GM12878 (cell line): ENCODE measurements at regions of chr5 and their contacts with region 1.

Region 1: DNA sequence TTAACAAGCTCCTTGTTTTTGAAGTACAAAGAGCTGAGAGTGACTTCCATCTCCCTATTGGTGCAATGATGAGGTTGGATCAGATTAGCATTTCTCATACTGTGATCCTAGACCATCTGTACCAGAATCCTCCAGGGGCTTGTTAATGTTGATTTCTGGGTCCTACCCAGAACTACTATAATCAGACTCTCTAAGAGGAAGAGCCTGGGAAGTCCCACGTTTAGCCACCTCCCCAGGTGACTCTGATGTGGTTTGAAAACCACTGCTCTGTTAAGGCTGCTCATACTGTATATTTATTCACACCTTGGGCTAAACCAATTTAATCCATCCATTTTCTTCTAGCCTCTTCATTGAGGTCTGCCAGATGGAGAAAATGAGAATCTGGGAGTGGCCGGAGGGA is 49.6 kb upstream of the SMIM32 start:
- DNase-seq: peak; percentile 24
- ATAC-seq: peak; percentile 93
- H3K4me3 ChIP-seq: no peak overlapping the region
- H3K27ac ChIP-seq: no peak overlapping the region
- H3K4me1 ChIP-seq: peaks cover 3% of the 10 kb centered on the region; the same call in 1 of the 2 replicates
- H3K27me3 ChIP-seq: no peaks in the 10 kb centered on the region; a peak in 1 of 4 replicates
- CTCF ChIP-seq: no peak
- EP300 ChIP-seq: 0 out of 4 replicates have a peak, but pooled peaks of 1 of the 2 experiments have one; percentile 12
- POLR2A ChIP-seq: no peak
- RAD21 ChIP-seq: no peak

Region 2: DNA sequence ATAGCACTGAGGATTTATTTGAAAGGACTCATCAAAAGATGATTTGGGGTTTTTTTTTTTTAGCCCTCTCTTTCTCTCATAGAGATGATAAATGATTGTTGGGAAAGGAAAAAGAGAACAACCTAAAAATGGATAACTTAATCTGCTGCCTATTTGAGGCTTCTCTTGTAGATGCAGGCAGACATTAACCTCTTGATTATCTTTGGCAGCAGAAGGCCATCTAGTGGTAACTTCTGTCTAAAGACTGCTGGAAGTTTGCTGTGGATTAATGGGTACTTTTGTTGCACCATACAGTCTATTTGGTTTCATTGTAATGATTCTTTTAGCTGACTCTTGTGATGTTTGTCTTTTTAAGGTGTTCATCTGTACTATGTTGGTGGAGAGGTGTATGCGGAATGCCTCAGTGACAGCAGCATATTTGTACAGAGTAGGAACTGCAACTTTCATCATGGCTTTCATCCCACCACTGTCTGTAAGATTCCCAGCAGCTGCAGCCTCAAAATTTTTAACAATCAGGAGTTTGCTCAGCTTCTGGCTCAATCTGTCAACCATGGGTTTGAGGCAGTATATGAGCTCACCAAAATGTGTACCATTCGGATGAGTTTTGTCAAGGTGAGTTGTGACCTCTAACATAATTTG is 68.5 kb before region 1 on chr5:
- CTCF ChIA-PET with region 1: no interaction called
- POLR2A ChIA-PET with region 1: no interaction called
- RAD21 ChIA-PET with region 1: no interaction called
- SMC1A ChIA-PET with region 1: no interaction called
- in situ Hi-C with region 1: no loop called
- intact Hi-C with region 1: no loop called
- DNase-seq: peak; percentile 12
- ATAC-seq: peak; percentile 88
- H3K4me3 ChIP-seq: no peak overlapping the region
- H3K27ac ChIP-seq: no peak overlapping the region
- H3K4me1 ChIP-seq: no peaks in the 10 kb centered on the region
- H3K27me3 ChIP-seq: no peaks in the 10 kb centered on the region
- CTCF ChIP-seq: peak; percentile 67 to 74 (median 70)
- EP300 ChIP-seq: no peak
- POLR2A ChIP-seq: no peak
- RAD21 ChIP-seq: peak; percentile 81

Region 3: DNA sequence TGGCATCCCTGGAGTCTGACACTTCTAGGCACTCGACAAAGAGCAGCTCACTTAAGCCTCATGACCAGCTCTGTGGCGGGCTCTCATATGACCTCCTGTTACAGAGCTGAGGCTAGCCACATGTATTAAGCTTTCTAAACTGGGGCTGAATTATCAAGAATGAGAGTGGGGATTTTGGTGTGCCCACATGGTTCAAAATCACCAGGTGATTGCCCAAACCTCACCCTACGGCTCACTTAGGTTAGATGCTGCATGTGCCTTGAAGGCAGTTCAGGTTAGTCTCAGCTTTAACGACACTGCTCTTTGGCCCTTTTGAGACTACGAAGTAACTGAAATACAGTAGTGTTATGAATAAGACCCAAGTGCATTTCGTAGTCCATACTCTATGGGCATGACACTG is 10.3 kb before region 1 on chr5:
- CTCF ChIA-PET with region 1: interaction called, 15 read pairs
- POLR2A ChIA-PET with region 1: interaction called, 5 read pairs
- RAD21 ChIA-PET with region 1: interaction called, 27 read pairs
- SMC1A ChIA-PET with region 1: interaction called, 39 read pairs
- in situ Hi-C with region 1: no loop called
- intact Hi-C with region 1: no loop called
- DNase-seq: peak; percentile 62
- ATAC-seq: peak; percentile 93
- H3K4me3 ChIP-seq: no peak overlapping the region
- H3K27ac ChIP-seq: no peak overlapping the region
- H3K4me1 ChIP-seq: no peaks in the 10 kb centered on the region; the same call in 1 of the 2 replicates
- H3K27me3 ChIP-seq: no peaks in the 10 kb centered on the region
- CTCF ChIP-seq: no peak
- EP300 ChIP-seq: peak; percentile 54 to 66; a peak in 1 of 4 replicates
- POLR2A ChIP-seq: no peak
- RAD21 ChIP-seq: no peak